Astrocyte of the cerebellum (primary cell): ENCODE measurements at regions of chr6 and their contacts with region 1.

Region 1: DNA sequence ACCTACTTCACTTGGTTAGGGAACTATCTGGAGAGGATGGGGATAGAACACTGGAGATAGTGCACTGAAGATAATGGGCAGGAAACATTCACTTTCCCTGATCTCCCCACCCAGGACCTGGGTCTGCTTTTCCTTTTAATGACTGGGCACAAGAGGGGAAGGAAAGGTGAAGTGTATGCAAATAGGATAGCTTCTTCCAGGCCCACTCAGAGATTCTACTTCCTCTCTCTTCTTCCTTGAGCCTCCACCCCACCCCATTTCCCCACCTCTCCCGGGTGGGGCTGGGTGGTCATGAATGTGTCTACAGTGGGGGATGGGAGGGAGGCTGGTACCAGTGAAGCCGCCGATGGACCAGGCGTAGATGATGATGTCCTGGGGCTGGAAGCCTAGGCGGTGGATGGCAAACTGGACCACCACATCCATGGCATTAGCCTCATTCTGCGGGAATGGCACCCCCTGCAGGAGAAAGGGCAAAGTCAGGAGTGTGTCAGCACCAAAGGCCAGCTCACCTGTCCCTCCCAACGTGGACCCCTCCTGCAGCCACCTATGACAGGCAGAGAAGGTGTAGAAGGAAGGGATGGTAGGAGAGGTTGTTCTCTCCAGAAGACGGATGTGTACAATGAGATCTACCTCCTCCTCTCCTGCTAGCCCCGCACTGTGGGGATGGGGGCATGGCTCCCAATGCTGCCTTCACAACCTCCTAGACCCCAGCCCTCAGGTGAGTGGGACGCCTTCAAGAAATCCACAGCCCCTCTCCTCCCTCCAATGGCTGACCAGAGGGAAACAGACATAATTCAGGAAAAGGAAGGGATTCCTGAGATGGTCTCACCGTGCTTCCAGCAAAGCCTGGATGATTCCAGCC is 8.6 kb upstream of the LY6G5C start:
- DNase-seq: no peak
- H3K4me3 ChIP-seq: no peak overlapping the region
- CTCF ChIP-seq: peak; percentile 58

Region 2: GRCh38 chr6:31609519-31610406 is 79.7 kb before region 1 on chr6:
- in situ Hi-C with region 1: no loop called
- DNase-seq: no peak
- H3K4me3 ChIP-seq: no peak overlapping the region
- CTCF ChIP-seq: no peak

Region 3: DNA sequence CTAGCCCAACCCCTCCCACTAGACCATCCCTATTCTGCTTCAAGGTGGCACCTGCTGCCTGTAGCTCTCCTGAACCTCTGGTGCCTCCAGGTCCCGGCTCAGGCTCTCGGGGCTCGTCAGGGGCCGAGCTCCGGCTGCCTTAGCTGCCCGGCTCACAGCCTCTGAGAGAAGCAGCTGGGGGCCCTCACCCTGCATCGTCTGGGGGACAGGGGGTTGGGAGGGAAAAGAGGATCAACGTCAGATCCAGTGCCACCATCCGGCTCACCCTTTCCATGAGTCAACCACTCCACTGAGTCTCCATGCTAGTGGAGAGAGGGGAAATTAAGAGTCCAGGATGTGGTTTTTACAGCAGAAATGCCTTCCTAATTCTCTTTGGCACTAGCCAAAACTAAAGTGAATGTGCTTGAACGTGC is 50.0 kb before region 1 on chr6:
- in situ Hi-C with region 1: no loop called
- DNase-seq: no peak
- H3K4me3 ChIP-seq: no peak overlapping the region
- CTCF ChIP-seq: no peak

Region 4: GRCh38 chr6:31729979-31730630 is 40.6 kb after region 1 on chr6:
- in situ Hi-C with region 1: loop called (anchors 5 kb)
- DNase-seq: peak; percentile 78
- H3K4me3 ChIP-seq: peak overlapping the region; percentile 97
- CTCF ChIP-seq: no peak